ENCODE measurements at regions of chr18 and their contacts with region 1.

Region 1: GRCh38 chr18:70431203-70431624 is 142.4 kb downstream of the SOCS6 start:
- DNase-seq: peak; percentile 82
- H3K4me3 Mint-ChIP-seq: no peak overlapping the region
- H3K27ac Mint-ChIP-seq: peak overlapping the region; percentile 43
- H3K4me1 Mint-ChIP-seq: peaks cover 7% of the 10 kb centered on the region
- H3K27me3 Mint-ChIP-seq: no peaks in the 10 kb centered on the region
- CTCF ChIP-seq: no peak

Region 2: DNA sequence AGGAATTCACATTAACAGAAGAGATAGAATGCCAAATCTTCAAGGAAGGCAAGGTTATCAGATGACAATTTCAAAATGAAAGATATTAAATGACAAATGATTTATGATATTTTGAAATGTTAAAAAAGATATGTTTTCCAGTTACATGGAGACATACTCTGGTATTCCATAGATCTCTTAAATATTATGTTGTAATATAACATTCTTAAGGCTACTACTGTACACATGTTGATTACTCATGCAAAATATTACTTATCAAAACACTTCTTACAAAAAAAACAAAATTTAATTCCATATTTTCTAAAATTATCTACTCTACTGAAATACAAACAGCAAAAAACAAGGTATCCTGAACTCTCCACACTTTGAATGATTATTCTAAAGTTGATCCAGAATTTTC is 248.7 kb before region 1 on chr18:
- CTCF ChIA-PET with region 1: interaction called, 323 read pairs
- POLR2A ChIA-PET with region 1: no interaction called
- intact Hi-C with region 1: no loop called
- DNase-seq: peak; percentile 2
- H3K4me3 Mint-ChIP-seq: no peak overlapping the region
- H3K27ac Mint-ChIP-seq: no peak overlapping the region
- H3K4me1 Mint-ChIP-seq: peaks cover 17% of the 10 kb centered on the region
- H3K27me3 Mint-ChIP-seq: no peaks in the 10 kb centered on the region
- CTCF ChIP-seq: no peak

Region 3: DNA sequence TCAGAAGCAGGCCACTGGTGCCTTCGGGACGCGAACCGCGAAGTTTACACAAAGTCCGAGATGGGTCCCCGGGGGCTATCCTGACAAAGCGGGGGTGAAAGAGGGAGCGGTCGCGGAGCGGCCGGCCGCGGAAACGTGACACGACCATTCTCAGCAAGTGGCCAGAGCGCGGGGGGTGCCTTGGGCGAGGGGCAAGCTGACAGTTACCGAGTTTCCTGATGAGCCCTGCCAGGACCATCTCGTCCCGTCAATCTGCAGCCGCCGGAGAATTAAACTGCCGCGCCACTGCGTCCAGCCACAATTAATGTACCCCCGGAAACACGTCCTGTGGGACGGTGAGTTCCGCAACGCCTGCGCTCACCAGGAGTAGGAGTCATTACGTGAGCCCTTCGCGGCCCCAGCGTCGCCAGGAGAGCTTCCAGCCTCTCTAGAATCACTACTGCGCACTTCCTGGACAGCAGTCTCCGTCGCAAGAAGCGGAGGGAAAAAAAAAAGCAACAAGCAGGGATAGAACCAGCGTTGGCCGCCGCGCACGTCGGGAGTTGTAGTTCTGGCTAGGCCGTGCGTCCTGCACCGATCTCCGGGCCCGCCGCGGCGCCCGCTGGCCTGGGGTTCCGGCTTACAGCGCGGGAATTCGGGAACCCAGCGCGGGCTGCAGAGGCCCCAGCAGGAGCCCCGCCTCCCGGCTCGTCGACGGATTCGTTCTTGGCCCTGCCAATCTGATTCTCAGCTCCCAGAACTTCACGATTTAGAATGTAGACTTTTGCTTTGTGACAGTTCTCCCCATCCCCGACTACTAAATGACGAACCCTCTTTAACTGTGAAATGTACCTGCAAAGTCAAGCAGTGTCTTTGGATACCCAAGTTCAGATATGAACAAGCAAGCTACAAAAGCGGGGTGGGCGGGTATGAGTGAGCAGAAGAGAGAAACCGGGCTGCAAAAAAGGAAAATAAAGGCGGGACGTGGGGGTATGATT is 225.5 kb before region 1 on chr18 and contains the start of gene RTTN:
- CTCF ChIA-PET with region 1: interaction called, 323 read pairs
- POLR2A ChIA-PET with region 1: interaction called, 6 read pairs
- intact Hi-C with region 1: loop called (anchors 2 kb)
- DNase-seq: peak; percentile 92
- H3K4me3 Mint-ChIP-seq: peak within 1 kb of the TSS; percentile 90
- H3K27ac Mint-ChIP-seq: peak within 1 kb of the TSS; percentile 93
- H3K4me1 Mint-ChIP-seq: peaks cover 16% of the 10 kb centered on the region
- H3K27me3 Mint-ChIP-seq: no peaks in the 10 kb centered on the region
- CTCF ChIP-seq: no peak
- total RNA-seq, gene RTTN: 55.8 and 64.7 TPM in 2 replicates

Region 4: DNA sequence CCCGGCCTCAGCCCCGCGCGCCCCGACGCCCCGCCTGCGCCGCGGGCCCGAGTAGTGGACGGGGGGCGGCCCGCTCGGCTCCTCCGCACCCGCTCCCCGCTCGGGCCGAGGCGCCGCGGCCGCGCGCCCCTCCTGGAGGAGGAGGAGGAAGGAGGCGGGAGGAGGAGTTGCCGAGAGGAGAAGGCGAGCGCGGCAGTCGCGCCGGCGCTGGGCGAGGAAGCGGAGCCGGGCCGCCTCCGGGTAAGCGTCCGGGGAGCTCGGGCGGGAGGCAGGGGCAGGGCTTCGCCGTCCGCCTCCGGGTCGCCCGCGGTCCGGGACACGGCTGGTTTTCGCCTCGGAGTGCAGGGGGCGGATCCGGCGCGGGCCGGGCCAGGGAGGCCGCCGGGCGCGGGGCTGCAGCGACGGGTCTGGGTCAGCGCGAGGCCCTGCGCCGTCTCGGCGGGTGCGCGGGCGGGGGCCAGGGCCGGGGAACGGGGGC is 142.3 kb before region 1 on chr18 and contains the start of gene SOCS6:
- CTCF ChIA-PET with region 1: interaction called, 11 read pairs
- POLR2A ChIA-PET with region 1: interaction called, 5 read pairs
- intact Hi-C with region 1: loop called (anchors 1 kb)
- DNase-seq: peak; percentile 68
- H3K4me3 Mint-ChIP-seq: peak within 1 kb of the TSS; percentile 81
- H3K27ac Mint-ChIP-seq: peak within 1 kb of the TSS; percentile 83
- H3K4me1 Mint-ChIP-seq: peaks cover 24% of the 10 kb centered on the region
- H3K27me3 Mint-ChIP-seq: no peaks in the 10 kb centered on the region
- CTCF ChIP-seq: no peak
- total RNA-seq, gene SOCS6: 16.9 and 20.4 TPM in 2 replicates

Region 5: DNA sequence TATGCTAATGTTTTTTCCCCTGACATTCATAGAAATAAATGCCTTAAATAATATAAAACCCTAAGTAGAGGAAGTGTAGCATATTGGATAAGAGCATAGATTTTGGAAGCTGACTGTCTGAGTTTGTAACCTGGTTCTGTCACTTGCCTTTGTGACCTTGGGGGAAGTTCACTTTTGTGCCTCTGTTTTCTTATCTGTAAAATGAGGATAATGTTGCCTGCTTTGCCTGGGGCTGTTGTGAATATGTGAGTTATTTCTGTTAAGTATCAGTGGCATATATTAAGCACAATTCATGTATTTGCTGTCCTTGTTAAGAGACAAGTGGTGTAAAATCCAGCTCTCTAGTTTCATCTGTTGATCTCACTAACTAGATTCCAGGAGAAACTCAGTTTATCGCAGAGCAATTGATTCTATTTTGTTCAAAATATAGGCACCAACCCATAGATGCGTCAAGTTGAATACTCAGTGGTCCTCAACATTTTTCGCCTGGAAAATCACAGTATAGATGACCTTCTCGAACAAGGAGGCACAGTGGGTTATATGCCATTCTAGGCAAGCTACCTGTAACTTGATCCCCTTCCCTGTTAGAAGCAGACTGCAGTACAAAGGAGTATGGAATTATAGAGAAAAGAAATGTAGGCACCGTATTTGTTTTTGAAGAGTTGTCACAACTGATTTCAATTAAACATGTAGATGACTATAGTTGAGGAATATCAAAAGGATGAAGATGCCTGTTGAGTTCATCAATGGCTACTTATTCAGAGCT is 75.4 kb before region 1 on chr18:
- CTCF ChIA-PET with region 1: interaction called, 24 read pairs
- POLR2A ChIA-PET with region 1: interaction called, 5 read pairs
- intact Hi-C with region 1: no loop called
- DNase-seq: no peak
- H3K4me3 Mint-ChIP-seq: no peak overlapping the region
- H3K27ac Mint-ChIP-seq: peak overlapping the region; percentile 63
- H3K4me1 Mint-ChIP-seq: peaks cover 8% of the 10 kb centered on the region
- H3K27me3 Mint-ChIP-seq: no peaks in the 10 kb centered on the region
- CTCF ChIP-seq: no peak

Region 6: GRCh38 chr18:70415823-70416488 is 15.3 kb before region 1 on chr18:
- CTCF ChIA-PET with region 1: interaction called, 41 read pairs
- POLR2A ChIA-PET with region 1: interaction called, 3 read pairs
- intact Hi-C with region 1: no loop called
- DNase-seq: peak; percentile 62
- H3K4me3 Mint-ChIP-seq: no peak overlapping the region
- H3K27ac Mint-ChIP-seq: peak overlapping the region; percentile 10
- H3K4me1 Mint-ChIP-seq: peaks cover 28% of the 10 kb centered on the region
- H3K27me3 Mint-ChIP-seq: no peaks in the 10 kb centered on the region
- CTCF ChIP-seq: no peak